PC-9 (cell line): ENCODE measurements at regions of chr5 and their contacts with region 1.

Region 1: GRCh38 chr5:39424736-39425637 is at the start of gene DAB2:
- DNase-seq: peak; percentile 80 to 92
- H3K4me3 ChIP-seq: peak within 1 kb of the TSS; percentile 72
- H3K27ac ChIP-seq: peak within 1 kb of the TSS; percentile 49
- H3K4me1 ChIP-seq: peaks cover 28% of the 10 kb centered on the region
- H3K27me3 ChIP-seq: no peaks in the 10 kb centered on the region
- CTCF ChIP-seq: peak; percentile 64
- total RNA-seq, gene DAB2: 21.0 and 25.8 TPM in 2 replicates

Region 2: DNA sequence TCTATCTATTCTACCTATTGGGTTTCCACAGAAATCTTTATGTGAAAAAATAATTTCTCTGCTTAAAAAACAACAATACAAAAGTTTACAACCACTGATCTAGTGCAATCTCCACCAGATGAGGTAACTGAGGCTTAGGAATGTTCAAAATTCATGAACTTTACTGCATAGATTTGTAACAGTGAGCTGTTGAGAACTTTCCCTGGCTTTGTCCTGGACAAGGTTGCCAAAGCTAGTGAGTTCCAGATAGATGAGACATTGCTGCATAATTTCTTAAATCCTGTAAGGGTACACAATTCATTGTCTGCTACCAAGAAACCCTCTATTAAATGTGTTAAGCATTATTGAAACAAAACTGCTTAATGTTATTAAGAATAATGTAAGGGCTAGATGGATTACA is 476.5 kb before region 1 on chr5:
- CTCF ChIA-PET with region 1: no interaction called
- POLR2A ChIA-PET with region 1: interaction called, 15 read pairs
- intact Hi-C with region 1: no loop called
- DNase-seq: no peak
- H3K4me3 ChIP-seq: no peak overlapping the region
- H3K27ac ChIP-seq: no peak overlapping the region
- H3K4me1 ChIP-seq: no peaks in the 10 kb centered on the region
- H3K27me3 ChIP-seq: no peaks in the 10 kb centered on the region
- CTCF ChIP-seq: no peak

Region 3: DNA sequence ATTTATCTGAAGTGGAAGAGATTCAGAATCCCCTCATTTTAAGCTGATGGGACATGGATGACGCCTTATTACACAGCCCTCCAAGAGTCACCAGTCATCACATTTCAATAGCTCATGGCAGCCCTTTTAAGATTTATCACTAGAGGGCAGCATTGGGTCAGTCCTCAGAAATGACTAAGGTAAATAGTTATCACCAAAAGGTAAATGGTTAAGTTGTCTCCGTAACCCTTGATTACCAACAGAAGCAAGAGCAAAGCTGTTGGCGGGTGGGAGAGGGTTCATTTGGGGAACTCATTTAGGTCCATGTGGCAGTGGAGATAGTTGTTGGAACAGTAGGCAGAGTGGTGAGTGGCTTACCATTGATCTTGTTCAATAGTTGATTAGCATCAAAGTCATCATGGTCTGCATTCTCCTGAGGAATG is 48.7 kb before region 1 on chr5:
- CTCF ChIA-PET with region 1: interaction called, 19 read pairs
- POLR2A ChIA-PET with region 1: interaction called, 11 read pairs
- intact Hi-C with region 1: loop called (anchors 1 kb)
- DNase-seq: peak; percentile 63 to 66
- H3K4me3 ChIP-seq: no peak overlapping the region
- H3K27ac ChIP-seq: no peak overlapping the region
- H3K4me1 ChIP-seq: no peaks in the 10 kb centered on the region
- H3K27me3 ChIP-seq: no peaks in the 10 kb centered on the region
- CTCF ChIP-seq: peak; percentile 96

Region 4: DNA sequence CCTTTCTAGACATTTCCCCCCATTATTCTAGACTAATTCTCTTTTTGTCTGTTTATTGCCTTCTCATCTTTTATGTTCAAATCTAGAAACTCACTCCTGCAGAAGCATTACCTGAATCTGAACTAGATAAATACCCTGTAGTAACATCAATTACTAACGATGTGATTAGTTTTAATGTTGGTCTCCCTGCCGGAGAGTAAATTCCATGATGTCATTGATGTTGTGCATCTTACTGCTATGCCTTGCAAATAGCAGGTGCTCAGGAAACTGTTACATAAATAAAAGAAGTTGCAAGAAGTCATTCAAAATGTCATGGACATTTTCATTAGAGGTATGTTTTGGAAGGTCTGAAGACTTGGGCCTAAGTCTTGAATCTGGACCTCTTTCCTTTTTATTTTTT is 37.7 kb before region 1 on chr5:
- CTCF ChIA-PET with region 1: no interaction called
- POLR2A ChIA-PET with region 1: no interaction called
- intact Hi-C with region 1: no loop called
- DNase-seq: peak in 1 of 2 experiments; percentile 8
- H3K4me3 ChIP-seq: no peak overlapping the region
- H3K27ac ChIP-seq: no peak overlapping the region
- H3K4me1 ChIP-seq: no peaks in the 10 kb centered on the region
- H3K27me3 ChIP-seq: no peaks in the 10 kb centered on the region
- CTCF ChIP-seq: no peak

Region 5: GRCh38 chr5:39399135-39400036 is 25.6 kb before region 1 on chr5:
- CTCF ChIA-PET with region 1: interaction called, 16 read pairs
- POLR2A ChIA-PET with region 1: interaction called, 22 read pairs
- intact Hi-C with region 1: loop called (anchors 1 kb)
- DNase-seq: peak; percentile 60 to 97
- H3K4me3 ChIP-seq: no peak overlapping the region
- H3K27ac ChIP-seq: peak overlapping the region; percentile 90
- H3K4me1 ChIP-seq: peaks cover 31% of the 10 kb centered on the region
- H3K27me3 ChIP-seq: no peaks in the 10 kb centered on the region
- CTCF ChIP-seq: no peak

Region 6: DNA sequence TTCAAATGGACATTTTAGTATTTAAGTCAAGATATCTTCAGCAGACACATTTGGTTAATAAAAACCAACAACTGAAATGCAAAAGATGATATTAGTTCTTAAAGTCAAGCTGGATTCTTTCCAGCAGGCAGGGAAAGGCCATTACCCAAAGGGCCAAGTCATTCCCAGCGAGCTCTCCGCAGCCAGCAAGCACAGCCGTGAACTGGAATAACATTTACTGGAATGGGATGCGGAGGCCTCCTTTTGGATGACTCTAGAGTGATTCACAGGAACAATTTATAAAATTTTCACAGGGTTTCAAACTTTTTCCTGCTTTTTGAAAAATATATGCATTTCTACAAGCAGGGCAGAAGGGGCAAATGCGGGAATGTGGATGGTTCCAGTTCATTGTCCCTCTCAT is 76.4 kb after region 1 on chr5:
- CTCF ChIA-PET with region 1: no interaction called
- POLR2A ChIA-PET with region 1: interaction called, 6 read pairs
- intact Hi-C with region 1: loop called (anchors 5 kb)
- DNase-seq: peak in 1 of 2 experiments; percentile 31
- H3K4me3 ChIP-seq: no peak overlapping the region
- H3K27ac ChIP-seq: no peak overlapping the region
- H3K4me1 ChIP-seq: peaks cover 11% of the 10 kb centered on the region
- H3K27me3 ChIP-seq: no peaks in the 10 kb centered on the region
- CTCF ChIP-seq: no peak

Region 7: GRCh38 chr5:39513236-39513635 is 88.2 kb after region 1 on chr5:
- CTCF ChIA-PET with region 1: interaction called, 3 read pairs
- POLR2A ChIA-PET with region 1: no interaction called
- intact Hi-C with region 1: loop called (anchors 1 kb)
- DNase-seq: peak; percentile 55 to 70
- H3K4me3 ChIP-seq: no peak overlapping the region
- H3K27ac ChIP-seq: no peak overlapping the region
- H3K4me1 ChIP-seq: peaks cover 16% of the 10 kb centered on the region
- H3K27me3 ChIP-seq: no peaks in the 10 kb centered on the region
- CTCF ChIP-seq: no peak

Region 8: DNA sequence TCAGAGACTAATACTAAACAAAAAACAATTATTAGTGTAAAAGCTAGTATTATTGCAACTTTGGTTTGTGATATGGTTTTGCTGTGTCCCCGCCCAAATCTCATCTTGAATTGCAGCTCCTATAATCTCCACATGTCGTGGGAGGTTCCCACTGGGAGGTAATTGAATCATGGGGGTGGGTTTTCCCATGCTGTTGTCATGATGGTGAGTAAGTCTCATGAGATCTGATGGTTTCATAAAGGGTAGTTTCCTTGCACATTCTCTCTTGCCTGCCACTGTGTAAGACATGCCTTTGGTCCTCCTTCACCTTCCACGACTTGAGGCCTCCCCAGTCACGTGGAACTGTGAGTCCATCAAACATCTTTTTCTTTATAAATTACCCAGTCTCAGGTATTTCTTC is 325.7 kb after region 1 on chr5:
- CTCF ChIA-PET with region 1: no interaction called
- POLR2A ChIA-PET with region 1: no interaction called
- intact Hi-C with region 1: no loop called
- DNase-seq: no peak
- H3K4me3 ChIP-seq: no peak overlapping the region
- H3K27ac ChIP-seq: no peak overlapping the region
- H3K4me1 ChIP-seq: peaks cover 4% of the 10 kb centered on the region; the same call in 1 of the 2 replicates
- H3K27me3 ChIP-seq: no peaks in the 10 kb centered on the region
- CTCF ChIP-seq: no peak